Gastrocnemius medialis (tissue), 4 donors: ENCODE measurements at regions of chr12 and their contacts with region 1.

Region 1: GRCh38 chr12:51531978-51532497 is 59.0 kb upstream of the SCN8A start:
- DNase-seq: peak; percentile 15 to 44
- ATAC-seq: peak; percentile 82 to 83
- H3K4me3 ChIP-seq: no peak overlapping the region
- H3K27ac ChIP-seq: no peak overlapping the region
- H3K4me1 ChIP-seq: no peaks in the 10 kb centered on the region
- H3K27me3 ChIP-seq: peaks cover 0 to 8% (median 3%) of the 10 kb centered on the region in 3 donors
- CTCF ChIP-seq: peak; percentile 48 to 85 (median 66)
- POLR2A ChIP-seq: no peak

Region 2: DNA sequence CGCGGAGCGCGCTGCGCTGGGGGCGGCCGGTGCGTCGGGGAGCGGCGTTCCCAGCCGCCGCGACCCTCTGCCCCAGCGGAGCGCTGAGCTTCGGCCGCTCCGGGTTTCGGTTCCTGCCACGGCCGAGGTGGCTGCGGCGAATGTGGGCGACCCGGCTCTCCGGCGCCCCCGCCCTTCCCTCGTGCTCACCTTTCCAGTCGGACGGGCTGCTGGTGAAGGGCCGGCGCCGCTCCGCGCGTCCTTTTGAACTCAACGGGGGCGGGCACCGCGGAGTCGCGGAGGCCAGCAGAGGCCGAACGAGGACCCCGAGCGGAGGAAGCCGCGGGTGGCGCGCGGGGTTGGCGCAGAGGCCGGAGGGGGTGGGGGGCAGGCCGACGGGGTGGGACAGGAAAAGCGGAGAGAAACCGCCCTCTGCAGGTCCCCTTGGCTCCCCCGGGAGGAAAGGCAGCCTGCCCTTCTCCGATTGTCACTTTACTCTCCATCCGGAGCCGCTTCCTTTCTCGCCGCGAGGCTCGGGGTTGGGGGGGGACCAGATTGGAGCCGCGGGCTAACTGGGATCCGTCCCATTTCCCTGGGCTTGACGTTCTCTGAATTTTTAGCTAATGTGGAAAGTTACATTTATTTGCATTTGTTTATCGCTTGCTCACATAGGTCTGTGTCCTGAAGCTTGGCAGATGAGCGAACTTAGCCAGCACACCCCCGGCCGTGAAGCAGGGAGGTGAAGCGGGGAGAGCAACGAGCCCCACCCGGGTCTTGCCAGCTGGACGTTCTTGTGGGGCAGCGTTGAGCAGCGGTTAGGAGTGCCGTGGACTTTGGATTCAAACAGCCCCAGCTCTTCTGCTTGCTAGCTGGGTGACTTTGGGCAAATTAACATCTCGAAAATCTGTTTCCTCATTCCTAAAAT is 261.7 kb before region 1 on chr12 and contains the start of gene SMAGP:
- in situ Hi-C with region 1: loop called in 1 of 4 experiments (anchors 25 kb)
- intact Hi-C with region 1: loop called (anchors 5 kb)
- DNase-seq: no peak
- ATAC-seq: peak; percentile 50 to 63
- H3K4me3 ChIP-seq: peak within 1 kb of the TSS; percentile 66 to 93 (median 73)
- H3K27ac ChIP-seq: peak within 1 kb of the TSS; percentile 35 to 74 (median 60)
- H3K4me1 ChIP-seq: peaks cover 0 to 6% of the 10 kb centered on the region in 2 donors
- H3K27me3 ChIP-seq: peaks cover 8 to 30% (median 15%) of the 10 kb centered on the region in 3 donors
- CTCF ChIP-seq: peak in 1 of 5 experiments; percentile 18
- POLR2A ChIP-seq: no peak
- total RNA-seq, gene SMAGP: 1.7 to 3.5 (median 2.5) TPM